Naive thymus-derived CD4-positive, alpha-beta T cell (primary cell): ENCODE measurements at regions of chr21 and their contacts with region 1.

Region 1: DNA sequence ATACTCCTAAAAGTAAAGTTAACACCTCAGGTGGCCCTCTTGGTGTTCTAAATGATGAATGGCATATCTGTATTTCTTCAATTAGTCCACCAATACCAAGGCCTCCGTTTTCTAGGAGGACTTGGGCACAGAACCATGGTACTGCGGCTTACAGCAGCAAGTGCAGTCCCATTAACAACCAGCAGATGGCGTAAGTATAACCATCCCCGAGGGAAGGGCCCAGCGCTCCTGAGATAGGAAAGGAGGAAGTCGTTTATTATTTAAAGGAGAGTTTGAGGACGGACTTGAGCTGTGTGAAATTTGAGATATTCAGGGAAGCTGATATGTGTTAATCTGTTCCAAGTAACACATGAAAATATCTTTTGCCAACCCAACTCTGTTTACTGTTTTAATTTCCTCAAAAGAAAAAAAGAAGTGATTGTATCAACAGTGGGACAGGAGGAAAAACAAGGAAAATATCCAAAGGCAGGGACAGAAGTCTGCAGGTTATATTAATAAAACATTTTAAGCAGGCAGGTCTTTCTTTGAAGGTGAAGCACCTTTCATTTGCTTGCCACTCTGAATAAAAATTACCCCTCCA is 37.7 kb upstream of the KCNJ15 start:
- DNase-seq: peak; percentile 22 to 74 (median 53)
- ATAC-seq: peak; percentile 89
- H3K4me3 ChIP-seq: no peak overlapping the region
- H3K4me3 Mint-ChIP-seq: no peak overlapping the region
- H3K27ac ChIP-seq: no peak overlapping the region
- H3K27ac Mint-ChIP-seq: peak overlapping the region in 5 of 9 donors; percentile 2 to 68 (median 30)
- H3K4me1 ChIP-seq: no peaks in the 10 kb centered on the region
- H3K4me1 Mint-ChIP-seq: peaks cover 0 to 6% (median 4%) of the 10 kb centered on the region in 7 donors
- H3K27me3 ChIP-seq: no peaks in the 10 kb centered on the region
- H3K27me3 Mint-ChIP-seq: no peaks in the 10 kb centered on the region

Region 2: GRCh38 chr21:38159355-38159754 is 59.8 kb before region 1 on chr21:
- CTCF ChIA-PET with region 1: interaction called, 3 read pairs
- POLR2A ChIA-PET with region 1: no interaction called
- intact Hi-C with region 1: loop called in 1 of 2 experiments (anchors 1 kb)
- DNase-seq: peak; percentile 23 to 68 (median 54)
- ATAC-seq: peak; percentile 54
- H3K4me3 ChIP-seq: no peak overlapping the region
- H3K4me3 Mint-ChIP-seq: no peak overlapping the region
- H3K27ac ChIP-seq: no peak overlapping the region
- H3K27ac Mint-ChIP-seq: no peak overlapping the region
- H3K4me1 ChIP-seq: no peaks in the 10 kb centered on the region
- H3K4me1 Mint-ChIP-seq: no peaks in the 10 kb centered on the region
- H3K27me3 ChIP-seq: no peaks in the 10 kb centered on the region
- H3K27me3 Mint-ChIP-seq: peaks cover 19 to 32% (median 20%) of the 10 kb centered on the region in 5 donors

Region 3: DNA sequence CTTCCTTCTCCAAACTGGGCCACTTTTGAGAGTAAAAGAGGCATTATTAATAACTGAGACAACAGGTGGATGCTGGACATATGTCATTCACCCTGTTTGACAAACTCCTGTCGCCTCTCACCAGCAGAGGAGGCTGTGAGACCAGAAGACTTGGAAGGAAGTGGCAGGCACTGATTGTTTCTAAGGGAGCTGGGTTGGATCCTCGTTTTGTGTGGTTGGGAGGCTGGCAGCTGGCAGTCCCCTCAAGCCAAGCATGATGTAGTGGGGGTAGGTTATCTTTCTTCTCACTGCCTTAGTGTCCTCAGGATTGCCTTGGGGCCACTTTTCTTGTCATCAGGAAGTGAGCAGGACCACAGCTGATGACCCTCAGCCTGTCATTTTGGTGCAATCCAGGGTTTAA is 48.9 kb before region 1 on chr21:
- CTCF ChIA-PET with region 1: interaction called, 7 read pairs
- POLR2A ChIA-PET with region 1: no interaction called
- intact Hi-C with region 1: loop called in 1 of 2 experiments (anchors 5 kb)
- DNase-seq: peak in 2 of 9 donors; percentile 1 to 5
- ATAC-seq: peak; percentile 51
- H3K4me3 ChIP-seq: no peak overlapping the region
- H3K4me3 Mint-ChIP-seq: no peak overlapping the region
- H3K27ac ChIP-seq: no peak overlapping the region
- H3K27ac Mint-ChIP-seq: no peak overlapping the region
- H3K4me1 ChIP-seq: no peaks in the 10 kb centered on the region
- H3K4me1 Mint-ChIP-seq: no peaks in the 10 kb centered on the region
- H3K27me3 ChIP-seq: no peaks in the 10 kb centered on the region
- H3K27me3 Mint-ChIP-seq: peaks cover 0 to 7% (median 0%) of the 10 kb centered on the region in 5 donors

Region 4: GRCh38 chr21:38244885-38245545 is 25.9 kb after region 1 on chr21:
- CTCF ChIA-PET with region 1: interaction called, 3 read pairs
- POLR2A ChIA-PET with region 1: no interaction called
- intact Hi-C with region 1: loop called in 1 of 2 experiments (anchors 1 kb)
- DNase-seq: peak; percentile 11 to 84 (median 70)
- ATAC-seq: peak; percentile 97
- H3K4me3 ChIP-seq: no peak overlapping the region
- H3K4me3 Mint-ChIP-seq: peak overlapping the region in 8 of 10 donors; percentile 42 to 74 (median 48)
- H3K27ac ChIP-seq: no peak overlapping the region
- H3K27ac Mint-ChIP-seq: peak overlapping the region; percentile 81 to 97 (median 89)
- H3K4me1 ChIP-seq: peaks cover 0 to 19% of the 10 kb centered on the region in 2 donors
- H3K4me1 Mint-ChIP-seq: peaks cover 17 to 43% (median 26%) of the 10 kb centered on the region in 7 donors
- H3K27me3 ChIP-seq: no peaks in the 10 kb centered on the region
- H3K27me3 Mint-ChIP-seq: peaks cover 0 to 17% (median 0%) of the 10 kb centered on the region in 5 donors

Region 5: DNA sequence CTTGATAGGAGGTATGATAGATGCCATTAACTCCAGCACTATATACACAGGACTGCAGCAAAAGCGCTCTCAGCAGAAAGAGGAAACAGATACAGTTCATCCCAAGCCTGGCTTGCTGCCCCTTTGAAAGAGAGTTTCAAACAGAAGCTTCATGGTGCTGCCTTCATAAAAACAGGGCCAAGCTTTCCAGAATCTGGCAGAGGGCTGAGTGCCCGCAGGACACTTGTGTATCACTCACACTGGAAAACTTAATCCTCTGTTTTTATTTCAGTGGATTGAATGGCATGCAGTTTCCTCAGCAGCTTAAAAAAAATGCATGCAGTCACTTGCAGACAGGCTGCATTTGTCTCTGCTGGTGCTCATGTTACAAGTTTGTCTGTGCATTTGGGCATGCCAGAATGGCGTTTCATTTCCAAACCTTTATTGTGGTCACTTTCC is 78.1 kb after region 1 on chr21:
- CTCF ChIA-PET with region 1: interaction called, 3 read pairs
- POLR2A ChIA-PET with region 1: no interaction called
- intact Hi-C with region 1: loop called in 1 of 2 experiments (anchors 2 kb)
- DNase-seq: no peak
- ATAC-seq: peak; percentile 57
- H3K4me3 ChIP-seq: no peak overlapping the region
- H3K4me3 Mint-ChIP-seq: peak overlapping the region in 8 of 10 donors; percentile 5 to 85 (median 65)
- H3K27ac ChIP-seq: peak overlapping the region; percentile 19
- H3K27ac Mint-ChIP-seq: peak overlapping the region in 8 of 9 donors; percentile 79 to 94 (median 88)
- H3K4me1 ChIP-seq: peaks cover 0 to 59% of the 10 kb centered on the region in 2 donors
- H3K4me1 Mint-ChIP-seq: peaks cover 23 to 91% (median 51%) of the 10 kb centered on the region in 7 donors
- H3K27me3 ChIP-seq: no peaks in the 10 kb centered on the region
- H3K27me3 Mint-ChIP-seq: peaks cover 0 to 3% (median 0%) of the 10 kb centered on the region in 5 donors

Region 6: GRCh38 chr21:38333301-38334272 is 114.4 kb after region 1 on chr21:
- CTCF ChIA-PET with region 1: interaction called, 7 read pairs
- POLR2A ChIA-PET with region 1: no interaction called
- intact Hi-C with region 1: loop called in 1 of 2 experiments (anchors 1 kb)
- DNase-seq: peak in 2 of 9 donors; percentile 4 to 11
- ATAC-seq: no peak
- H3K4me3 ChIP-seq: no peak overlapping the region
- H3K4me3 Mint-ChIP-seq: no peak overlapping the region
- H3K27ac ChIP-seq: no peak overlapping the region
- H3K27ac Mint-ChIP-seq: peak overlapping the region in 1 of 9 donors; percentile 72
- H3K4me1 ChIP-seq: no peaks in the 10 kb centered on the region
- H3K4me1 Mint-ChIP-seq: peaks cover 0 to 5% (median 0%) of the 10 kb centered on the region in 7 donors
- H3K27me3 ChIP-seq: no peaks in the 10 kb centered on the region
- H3K27me3 Mint-ChIP-seq: no peaks in the 10 kb centered on the region

Region 7: GRCh38 chr21:39175154-39175553 is 956.0 kb after region 1 on chr21:
- CTCF ChIA-PET with region 1: no interaction called
- POLR2A ChIA-PET with region 1: no interaction called
- intact Hi-C with region 1: loop called in 1 of 2 experiments (anchors 2 kb)
- DNase-seq: peak in 5 of 9 donors; percentile 9 to 29 (median 13)
- ATAC-seq: no peak
- H3K4me3 ChIP-seq: no peak overlapping the region
- H3K4me3 Mint-ChIP-seq: no peak overlapping the region
- H3K27ac ChIP-seq: no peak overlapping the region
- H3K27ac Mint-ChIP-seq: no peak overlapping the region
- H3K4me1 ChIP-seq: no peaks in the 10 kb centered on the region
- H3K4me1 Mint-ChIP-seq: peaks cover 0 to 18% (median 11%) of the 10 kb centered on the region in 7 donors
- H3K27me3 ChIP-seq: no peaks in the 10 kb centered on the region
- H3K27me3 Mint-ChIP-seq: no peaks in the 10 kb centered on the region